HepG2 (cell line): ENCODE measurements at regions of chr1 and their contacts with region 1.

Region 1: DNA sequence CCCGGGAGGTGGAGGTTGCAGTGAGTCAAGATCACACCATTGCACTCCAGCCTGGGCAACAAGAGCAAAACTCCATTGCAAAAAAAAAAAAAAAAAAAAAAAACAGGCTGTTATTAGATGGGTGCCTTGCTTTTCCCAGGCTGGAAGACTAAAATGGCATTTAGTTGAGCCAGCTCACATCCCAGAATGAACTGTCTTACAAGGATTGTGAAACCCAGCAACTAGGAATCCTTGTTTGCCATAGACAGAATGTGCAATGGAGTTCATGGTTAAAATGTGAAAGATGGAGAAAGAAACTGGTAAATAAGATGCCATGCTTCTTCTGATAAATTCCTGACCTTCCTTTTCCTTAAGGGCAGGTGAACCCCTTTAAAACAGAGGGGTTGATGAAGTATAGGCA is 215.8 kb upstream of the GREM2 start:
- DNase-seq: no peak
- ATAC-seq: no peak
- H3K4me3 ChIP-seq: no peak overlapping the region
- H3K27ac ChIP-seq: no peak overlapping the region
- H3K4me1 ChIP-seq: no peaks in the 10 kb centered on the region
- H3K27me3 ChIP-seq: no peaks in the 10 kb centered on the region
- CTCF ChIP-seq: no peak
- EP300 ChIP-seq: no peak
- POLR2A ChIP-seq: no peak
- RAD21 ChIP-seq: no peak

Region 2: GRCh38 chr1:241330619-241331327 is 503.0 kb after region 1 on chr1:
- CTCF ChIA-PET with region 1: no interaction called
- POLR2A ChIA-PET with region 1: no interaction called
- in situ Hi-C with region 1: no loop called
- intact Hi-C with region 1: loop called (anchors 5 kb)
- DNase-seq: no peak
- ATAC-seq: no peak
- H3K4me3 ChIP-seq: no peak overlapping the region
- H3K27ac ChIP-seq: no peak overlapping the region
- H3K4me1 ChIP-seq: no peaks in the 10 kb centered on the region
- H3K27me3 ChIP-seq: no peaks in the 10 kb centered on the region; a peak in 1 of 5 replicates
- CTCF ChIP-seq: no peak
- EP300 ChIP-seq: no peak
- POLR2A ChIP-seq: no peak
- RAD21 ChIP-seq: no peak

Region 3: GRCh38 chr1:241440904-241441303 is 613.1 kb after region 1 on chr1:
- CTCF ChIA-PET with region 1: no interaction called
- POLR2A ChIA-PET with region 1: no interaction called
- in situ Hi-C with region 1: no loop called
- intact Hi-C with region 1: no loop called
- DNase-seq: no peak
- ATAC-seq: no peak
- H3K4me3 ChIP-seq: no peak overlapping the region
- H3K27ac ChIP-seq: no peak overlapping the region
- H3K4me1 ChIP-seq: no peaks in the 10 kb centered on the region
- H3K27me3 ChIP-seq: no peaks in the 10 kb centered on the region
- CTCF ChIP-seq: no peak
- EP300 ChIP-seq: no peak
- POLR2A ChIP-seq: no peak
- RAD21 ChIP-seq: no peak